ENCODE measurements at regions of chr2 and their contacts with region 1.

Region 1: GRCh38 chr2:101007415-101008345 is 5.6 kb downstream of the RPL31 start:
- DNase-seq: no peak
- ATAC-seq: no peak
- H3K4me3 ChIP-seq: no peak overlapping the region
- H3K4me3 Mint-ChIP-seq: peak overlapping the region; percentile 8
- H3K27ac ChIP-seq: no peak overlapping the region
- H3K27ac Mint-ChIP-seq: peak overlapping the region; percentile 26
- H3K4me1 ChIP-seq: peaks cover 27% of the 10 kb centered on the region
- H3K4me1 Mint-ChIP-seq: peaks cover 60% of the 10 kb centered on the region
- H3K27me3 ChIP-seq: no peaks in the 10 kb centered on the region
- H3K27me3 Mint-ChIP-seq: no peaks in the 10 kb centered on the region
- CTCF ChIP-seq: no peak

Region 2: DNA sequence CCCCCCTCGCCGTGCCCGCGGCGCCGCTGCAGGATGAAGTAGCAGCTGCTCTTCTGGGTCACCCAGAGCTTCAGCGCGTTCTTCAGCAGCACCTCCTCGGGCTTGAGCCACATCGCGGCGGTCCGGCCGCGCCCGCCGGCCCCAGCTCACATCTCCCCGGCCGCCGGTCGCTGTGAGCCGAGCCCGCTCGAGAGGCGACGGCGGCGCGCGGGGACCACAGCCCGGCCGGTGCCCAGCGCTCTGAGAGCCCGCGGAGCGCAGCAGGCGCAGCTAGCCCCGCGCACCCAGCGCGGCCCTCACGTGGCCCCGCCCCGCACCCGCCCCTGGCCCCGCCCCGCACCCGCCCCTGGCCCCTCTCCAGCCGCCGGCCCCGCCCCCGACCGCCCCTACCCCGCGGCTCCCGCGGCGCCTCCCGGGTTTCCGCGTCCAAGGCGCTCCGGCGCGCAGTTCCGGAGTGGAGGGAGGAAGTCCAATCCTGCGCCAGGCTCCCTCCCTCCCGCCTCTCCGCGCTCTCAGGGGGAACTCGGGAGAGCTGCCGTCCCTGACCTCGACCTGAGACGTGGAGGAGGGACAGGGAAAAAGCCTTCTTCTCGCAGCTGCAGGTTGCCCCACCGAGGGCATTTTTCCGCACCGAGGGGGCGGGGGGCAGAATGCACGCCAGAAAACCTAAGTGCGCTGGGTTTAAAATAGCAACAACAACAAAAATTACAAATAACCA is 143.6 kb after region 1 on chr2 and contains the start of gene TBC1D8:
- CTCF ChIA-PET with region 1: interaction called, 3 read pairs
- POLR2A ChIA-PET with region 1: interaction called, 9 read pairs
- intact Hi-C with region 1: loop called in 1 of 2 experiments (anchors 2 kb)
- DNase-seq: peak; percentile 27 to 84 (median 52)
- ATAC-seq: peak; percentile 86
- H3K4me3 ChIP-seq: peak within 1 kb of the TSS; percentile 72
- H3K4me3 Mint-ChIP-seq: peak within 1 kb of the TSS; percentile 89
- H3K27ac ChIP-seq: no peak within 1 kb of the TSS
- H3K27ac Mint-ChIP-seq: peak within 1 kb of the TSS; percentile 26
- H3K4me1 ChIP-seq: peaks cover 28% of the 10 kb centered on the region
- H3K4me1 Mint-ChIP-seq: peaks cover 34% of the 10 kb centered on the region
- H3K27me3 ChIP-seq: peaks cover 0 to 5% of the 10 kb centered on the region in 2 experiments
- H3K27me3 Mint-ChIP-seq: peaks cover 23% of the 10 kb centered on the region
- CTCF ChIP-seq: no peak
- total RNA-seq, gene TBC1D8: 1.0 to 1.8 TPM

Region 3: DNA sequence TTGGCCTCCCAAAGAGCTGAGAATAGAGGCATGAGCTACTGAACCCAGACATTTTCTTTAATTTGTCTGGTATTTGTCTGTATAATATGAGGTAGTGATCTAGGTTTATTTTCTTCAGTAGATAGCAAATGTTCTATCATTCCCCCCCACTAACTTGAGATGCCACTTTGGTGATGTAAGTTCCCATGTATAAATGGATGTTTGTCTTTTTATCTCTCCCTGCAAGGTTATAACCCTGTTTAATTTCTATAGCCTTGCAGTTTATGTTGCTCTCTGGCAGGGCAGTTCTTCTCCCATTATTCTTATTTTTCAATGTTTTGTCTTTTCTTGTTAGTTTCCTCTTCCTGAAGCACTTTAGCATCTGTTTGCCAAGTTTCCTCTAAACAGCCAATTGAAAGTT is 650.7 kb after region 1 on chr2:
- CTCF ChIA-PET with region 1: no interaction called
- POLR2A ChIA-PET with region 1: no interaction called
- intact Hi-C with region 1: no loop called
- DNase-seq: no peak
- ATAC-seq: no peak
- H3K4me3 ChIP-seq: no peak overlapping the region
- H3K4me3 Mint-ChIP-seq: no peak overlapping the region
- H3K27ac ChIP-seq: no peak overlapping the region
- H3K27ac Mint-ChIP-seq: no peak overlapping the region
- H3K4me1 ChIP-seq: no peaks in the 10 kb centered on the region
- H3K4me1 Mint-ChIP-seq: no peaks in the 10 kb centered on the region
- H3K27me3 ChIP-seq: no peaks in the 10 kb centered on the region
- H3K27me3 Mint-ChIP-seq: no peaks in the 10 kb centered on the region
- CTCF ChIP-seq: no peak